AG04450 (cell line): ENCODE measurements at regions of chr15 and their contacts with region 1.

Region 1: DNA sequence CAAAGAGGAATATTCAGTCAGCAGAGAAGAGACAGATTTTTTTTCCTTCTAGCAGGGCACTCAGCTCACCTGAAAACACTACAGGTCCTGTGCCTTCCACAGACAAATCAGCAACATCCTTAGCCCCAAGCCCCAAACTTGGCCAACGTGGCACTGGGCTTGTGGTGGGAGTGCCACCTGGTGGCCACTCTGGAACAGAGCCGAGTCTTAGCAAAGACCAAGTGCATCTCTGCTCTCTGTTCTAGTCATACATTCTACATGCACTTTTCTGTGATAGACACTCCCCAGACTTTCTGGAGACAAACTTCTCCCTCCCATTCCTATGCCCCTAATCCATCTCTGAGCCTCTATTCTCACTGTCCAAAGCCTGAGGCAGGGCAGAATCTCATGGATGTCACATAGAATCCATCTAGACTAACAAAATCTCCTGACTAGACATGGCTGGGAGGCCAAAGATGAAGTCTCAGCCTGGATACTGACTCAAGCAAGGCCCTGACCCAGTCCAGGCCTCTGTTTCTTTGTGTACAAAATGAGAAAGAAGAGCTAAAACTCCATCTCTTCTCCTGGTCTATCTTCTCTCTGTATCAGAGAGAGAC is 5.1 kb upstream of the SEMA7A start:
- DNase-seq: peak; percentile 55
- H3K4me3 ChIP-seq: no peak overlapping the region
- H3K27ac ChIP-seq: peak overlapping the region; percentile 31
- H3K27me3 ChIP-seq: no peaks in the 10 kb centered on the region
- CTCF ChIP-seq: peak; percentile 91

Region 2: GRCh38 chr15:74291101-74292071 is 147.4 kb before region 1 on chr15:
- CTCF ChIA-PET with region 1: no interaction called
- POLR2A ChIA-PET with region 1: no interaction called
- DNase-seq: peak; percentile 21
- H3K4me3 ChIP-seq: no peak overlapping the region
- H3K27ac ChIP-seq: no peak overlapping the region
- H3K27me3 ChIP-seq: peaks cover 23% of the 10 kb centered on the region
- CTCF ChIP-seq: no peak

Region 3: DNA sequence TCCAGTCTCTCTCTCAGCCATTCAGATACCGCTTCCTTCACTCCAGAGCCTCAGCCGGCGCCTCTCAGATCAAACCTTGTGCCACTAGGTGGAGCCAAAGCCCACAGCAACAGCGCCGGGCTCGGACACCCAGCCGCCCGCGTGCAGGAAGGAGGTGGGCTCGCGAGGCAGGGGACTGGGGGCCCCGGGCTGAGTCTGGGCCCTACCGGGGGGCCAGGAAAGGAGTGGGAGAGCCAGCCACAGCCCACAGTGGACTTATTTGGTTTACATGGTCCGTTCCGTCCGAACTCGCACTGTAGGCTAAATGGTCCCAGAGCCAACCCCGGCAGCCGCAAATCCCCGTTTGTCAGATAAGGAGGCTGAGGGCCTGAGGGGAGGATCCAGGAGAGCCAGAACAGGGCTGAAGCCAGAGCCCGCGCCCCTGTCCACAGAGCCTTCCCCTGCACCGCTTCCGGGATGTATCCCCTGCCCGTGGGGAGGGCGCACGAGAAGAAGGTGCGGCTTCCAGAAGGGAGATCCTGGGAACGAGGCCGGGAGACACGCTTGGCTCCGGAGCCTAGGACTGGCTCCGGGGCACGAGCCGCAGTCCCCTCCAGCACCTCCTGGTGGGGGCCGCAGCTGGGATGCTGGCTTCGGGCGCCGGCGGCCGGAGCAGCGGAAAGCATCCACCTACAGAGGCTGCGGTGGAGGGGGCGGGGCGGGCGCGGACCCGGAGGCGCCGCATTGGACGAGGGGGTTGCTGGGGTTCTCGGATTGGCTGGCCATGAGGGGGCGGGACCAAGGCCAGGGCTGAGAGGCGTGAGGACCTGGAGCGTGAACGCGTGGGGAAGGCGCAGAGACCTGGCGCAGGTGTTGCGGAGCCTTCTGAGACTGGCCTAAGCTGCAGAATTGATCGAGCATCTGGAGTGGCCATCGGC is 64.8 kb before region 1 on chr15:
- CTCF ChIA-PET with region 1: interaction called, 47 read pairs
- POLR2A ChIA-PET with region 1: interaction called, 3 read pairs
- DNase-seq: no peak
- H3K4me3 ChIP-seq: peak overlapping the region; percentile 79
- H3K27ac ChIP-seq: no peak overlapping the region
- H3K27me3 ChIP-seq: peaks cover 30% of the 10 kb centered on the region
- CTCF ChIP-seq: peak; percentile 89

Region 4: GRCh38 chr15:74529921-74530320 is 91.1 kb after region 1 on chr15:
- CTCF ChIA-PET with region 1: no interaction called
- POLR2A ChIA-PET with region 1: no interaction called
- DNase-seq: peak; percentile 71
- H3K4me3 ChIP-seq: no peak overlapping the region
- H3K27ac ChIP-seq: peak overlapping the region; percentile 61
- H3K27me3 ChIP-seq: no peaks in the 10 kb centered on the region
- CTCF ChIP-seq: no peak

Region 5: GRCh38 chr15:74540761-74541493 is 102.1 kb after region 1 on chr15 and contains the start of gene ARID3B:
- CTCF ChIA-PET with region 1: interaction called, 10 read pairs
- POLR2A ChIA-PET with region 1: interaction called, 3 read pairs
- DNase-seq: peak; percentile 96
- H3K4me3 ChIP-seq: peak within 1 kb of the TSS; percentile 87
- H3K27ac ChIP-seq: peak within 1 kb of the TSS; percentile 84
- H3K27me3 ChIP-seq: no peaks in the 10 kb centered on the region
- CTCF ChIP-seq: no peak
- polyA plus RNA-seq, gene ARID3B: 1.6 and 2.4 TPM in 2 replicates